ENCODE measurements at regions of chr15 and their contacts with region 1.

Region 1: GRCh38 chr15:22961762-22962161 is 18.4 kb downstream of the CYFIP1 start:
- DNase-seq: peak; percentile 41
- ATAC-seq: peak; percentile 33; the same call in 1 of the 2 replicates
- H3K4me3 ChIP-seq: no peak overlapping the region
- H3K27ac ChIP-seq: peak overlapping the region; percentile 65; the same call in 1 of the 2 replicates
- H3K4me1 ChIP-seq: peaks cover 23% of the 10 kb centered on the region
- H3K27me3 ChIP-seq: no peaks in the 10 kb centered on the region
- CTCF ChIP-seq: no peak
- POLR2A ChIP-seq: no peak
- RAD21 ChIP-seq: no peak

Region 2: DNA sequence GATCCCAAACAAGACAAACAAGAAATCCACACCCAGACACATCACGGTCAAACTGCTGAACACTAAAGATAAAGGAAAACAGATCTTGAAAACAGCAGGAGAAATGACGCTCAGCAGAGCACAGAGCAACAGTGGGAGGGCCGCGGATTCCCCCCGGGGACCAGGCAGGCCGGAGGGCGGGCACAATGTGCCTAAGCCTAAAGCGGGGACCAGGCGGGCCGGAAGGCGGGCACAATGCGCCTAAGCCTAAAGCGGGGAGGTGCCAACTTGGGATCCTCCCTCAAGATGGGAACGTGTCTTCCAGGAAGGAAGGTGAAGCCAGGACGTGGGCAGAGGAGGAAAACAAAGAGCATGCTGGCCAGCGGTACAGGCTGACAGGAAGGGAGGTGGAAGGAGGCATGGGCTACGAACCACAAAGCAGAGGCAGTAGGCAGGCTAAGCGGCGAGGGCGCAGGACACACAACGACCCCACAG is 12.7 kb before region 1 on chr15:
- CTCF ChIA-PET with region 1: no interaction called
- POLR2A ChIA-PET with region 1: no interaction called
- dilution Hi-C with region 1: no loop called
- in situ Hi-C with region 1: no loop called
- intact Hi-C with region 1: no loop called
- DNase-seq: peak; percentile 24
- ATAC-seq: peak; percentile 66
- H3K4me3 ChIP-seq: no peak overlapping the region
- H3K27ac ChIP-seq: peak overlapping the region; percentile 2; the same call in 1 of the 2 replicates
- H3K4me1 ChIP-seq: peaks cover 20% of the 10 kb centered on the region
- H3K27me3 ChIP-seq: no peaks in the 10 kb centered on the region
- CTCF ChIP-seq: no peak
- POLR2A ChIP-seq: no peak
- RAD21 ChIP-seq: no peak

Region 3: DNA sequence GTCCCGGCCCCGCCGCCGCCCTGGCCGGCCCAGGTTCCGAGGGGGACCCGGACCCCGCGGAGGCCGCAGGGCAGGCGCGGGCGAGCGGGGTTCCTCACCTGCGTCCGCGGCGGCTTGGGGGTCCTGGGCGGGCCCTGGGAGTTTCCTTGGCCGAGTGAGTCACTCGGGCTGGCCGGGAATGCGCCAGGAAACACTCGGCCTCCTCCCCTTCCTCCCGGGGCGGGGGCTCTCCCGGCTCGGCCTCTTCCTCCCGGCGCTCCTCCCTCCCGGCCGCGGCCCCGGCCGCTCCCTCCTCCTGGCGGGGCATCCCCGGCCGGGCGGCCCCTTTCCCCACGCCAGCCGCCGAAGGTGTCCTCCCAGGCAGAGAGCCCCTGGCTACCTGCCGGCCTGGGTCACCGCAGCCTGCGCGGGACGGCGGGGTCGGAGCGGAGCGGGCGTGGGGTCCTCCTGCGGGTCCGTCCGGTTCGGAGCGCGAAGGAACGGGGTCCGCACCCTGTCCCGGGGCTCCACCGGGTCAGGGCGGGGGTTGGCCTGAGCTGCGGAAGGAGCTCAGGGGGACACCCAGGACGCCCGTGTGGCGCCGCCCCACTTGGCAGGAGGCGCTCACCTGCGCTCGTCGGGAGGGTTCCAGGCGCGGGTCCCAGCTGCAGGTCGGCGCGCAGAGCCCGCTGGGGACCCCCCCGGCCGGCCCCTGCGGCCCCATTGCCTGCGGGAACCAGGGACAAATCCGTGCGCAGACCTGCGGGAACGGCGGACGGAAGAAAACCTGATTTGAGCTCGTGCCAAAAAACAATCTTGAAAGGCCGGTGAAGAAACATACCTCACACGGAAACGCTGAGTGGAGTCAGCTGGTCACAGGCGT is 18.7 kb after region 1 on chr15 and contains the start of gene CYFIP1:
- CTCF ChIA-PET with region 1: interaction called, 3 read pairs
- POLR2A ChIA-PET with region 1: no interaction called
- dilution Hi-C with region 1: no loop called
- in situ Hi-C with region 1: no loop called
- intact Hi-C with region 1: loop called (anchors 1 kb)
- DNase-seq: peak; percentile 83
- ATAC-seq: peak; percentile 95
- H3K4me3 ChIP-seq: peak within 1 kb of the TSS; percentile 91
- H3K27ac ChIP-seq: peak within 1 kb of the TSS; percentile 80
- H3K4me1 ChIP-seq: peaks cover 2% of the 10 kb centered on the region
- H3K27me3 ChIP-seq: no peaks in the 10 kb centered on the region
- CTCF ChIP-seq: no peak
- POLR2A ChIP-seq: peak; percentile 63
- RAD21 ChIP-seq: no peak
- total RNA-seq, gene CYFIP1: 144 and 163 TPM in 2 replicates

Region 4: GRCh38 chr15:22995690-22996089 is 33.9 kb after region 1 on chr15:
- CTCF ChIA-PET with region 1: no interaction called
- POLR2A ChIA-PET with region 1: no interaction called
- dilution Hi-C with region 1: no loop called
- in situ Hi-C with region 1: no loop called
- intact Hi-C with region 1: no loop called
- DNase-seq: no peak
- ATAC-seq: no peak
- H3K4me3 ChIP-seq: no peak overlapping the region
- H3K27ac ChIP-seq: no peak overlapping the region
- H3K4me1 ChIP-seq: peaks cover 7% of the 10 kb centered on the region; the same call in 1 of the 2 replicates
- H3K27me3 ChIP-seq: no peaks in the 10 kb centered on the region
- CTCF ChIP-seq: no peak
- POLR2A ChIP-seq: no peak
- RAD21 ChIP-seq: no peak

Region 5: GRCh38 chr15:23118203-23118602 is 156.4 kb after region 1 on chr15:
- CTCF ChIA-PET with region 1: no interaction called
- POLR2A ChIA-PET with region 1: no interaction called
- dilution Hi-C with region 1: no loop called
- in situ Hi-C with region 1: no loop called
- intact Hi-C with region 1: no loop called
- DNase-seq: no peak
- ATAC-seq: no peak
- H3K4me3 ChIP-seq: no peak overlapping the region
- H3K27ac ChIP-seq: no peak overlapping the region
- H3K4me1 ChIP-seq: no peaks in the 10 kb centered on the region
- H3K27me3 ChIP-seq: no peaks in the 10 kb centered on the region
- CTCF ChIP-seq: no peak
- POLR2A ChIP-seq: no peak
- RAD21 ChIP-seq: no peak

Measured in IMR-90 (cell line).